Colonic mucosa (tissue), 4 donors: ENCODE measurements at regions of chr2 and their contacts with region 1.

Region 1: GRCh38 chr2:161223139-161223732 is 63.0 kb downstream of the TANK start:
- DNase-seq: no peak
- H3K4me3 ChIP-seq: no peak overlapping the region
- H3K27ac ChIP-seq: no peak overlapping the region
- H3K4me1 ChIP-seq: no peaks in the 10 kb centered on the region
- H3K27me3 ChIP-seq: no peaks in the 10 kb centered on the region
- CTCF ChIP-seq: peak; percentile 70

Region 2: DNA sequence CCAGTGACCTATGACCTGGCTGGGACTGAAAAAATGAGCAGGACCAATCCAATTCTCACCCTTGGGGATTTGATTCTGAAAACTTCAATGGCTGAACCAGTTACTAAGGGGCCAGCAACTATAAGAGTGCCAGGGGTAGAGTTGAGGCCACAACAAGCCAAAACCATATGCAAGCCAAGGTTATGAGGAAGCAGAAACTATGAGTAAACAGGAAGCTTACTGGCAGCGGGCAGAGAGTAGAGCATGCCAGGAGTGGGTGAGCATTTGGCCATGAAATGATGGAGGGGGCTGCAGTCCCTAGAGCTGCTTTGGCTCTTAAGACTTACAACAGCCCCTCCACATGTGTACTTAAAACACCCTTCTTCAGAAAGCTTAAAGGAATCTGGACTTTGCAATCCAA is 812.1 kb before region 1 on chr2:
- intact Hi-C with region 1: no loop called
- DNase-seq: no peak
- H3K4me3 ChIP-seq: no peak overlapping the region
- H3K27ac ChIP-seq: peak overlapping the region; percentile 36
- H3K4me1 ChIP-seq: peaks cover 6% of the 10 kb centered on the region
- H3K27me3 ChIP-seq: peaks cover 11% of the 10 kb centered on the region
- CTCF ChIP-seq: no peak

Region 3: DNA sequence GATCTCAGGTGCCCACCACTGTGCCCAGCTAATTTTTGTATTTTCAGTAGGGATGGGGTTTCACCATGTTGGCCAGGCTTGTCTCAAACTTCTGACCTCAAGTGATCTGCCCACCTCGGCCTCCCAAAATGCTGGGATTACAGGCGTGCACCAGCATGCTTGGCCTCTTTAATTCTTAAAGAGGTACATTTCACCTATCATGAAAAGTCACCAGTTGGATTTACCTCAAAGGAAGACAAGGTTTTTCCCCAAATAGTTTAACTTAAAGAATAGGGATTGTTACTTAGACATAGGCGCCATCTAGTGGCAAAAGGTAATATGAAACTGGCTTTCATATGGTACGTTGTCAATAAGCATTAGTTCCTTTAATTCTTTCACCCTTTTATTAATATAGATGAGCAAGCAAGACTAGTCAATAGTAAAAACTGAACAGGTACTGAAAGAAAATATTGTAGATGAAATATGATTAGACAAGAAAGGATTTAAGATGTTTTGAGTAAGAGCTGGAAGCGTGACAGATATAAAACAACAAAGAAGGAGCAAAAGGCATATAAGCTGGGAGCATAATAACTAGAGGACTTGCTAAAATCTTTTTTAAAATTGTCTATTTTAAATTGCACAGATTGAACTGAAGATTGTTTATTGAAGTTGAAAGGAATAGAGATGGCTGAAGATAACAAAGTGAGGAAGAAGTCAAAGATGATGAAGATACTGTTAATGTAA is 50.0 kb after region 1 on chr2:
- intact Hi-C with region 1: loop called (anchors 2 kb)
- DNase-seq: peak; percentile 27
- H3K4me3 ChIP-seq: no peak overlapping the region
- H3K27ac ChIP-seq: no peak overlapping the region
- H3K4me1 ChIP-seq: no peaks in the 10 kb centered on the region
- H3K27me3 ChIP-seq: no peaks in the 10 kb centered on the region
- CTCF ChIP-seq: peak; percentile 64

Region 4: GRCh38 chr2:161321944-161322648 is 98.9 kb after region 1 on chr2:
- intact Hi-C with region 1: no loop called
- DNase-seq: no peak
- H3K4me3 ChIP-seq: no peak overlapping the region
- H3K27ac ChIP-seq: no peak overlapping the region
- H3K4me1 ChIP-seq: no peaks in the 10 kb centered on the region
- H3K27me3 ChIP-seq: no peaks in the 10 kb centered on the region
- CTCF ChIP-seq: no peak

Region 5: GRCh38 chr2:161400076-161400475 is 176.8 kb after region 1 on chr2:
- intact Hi-C with region 1: no loop called
- DNase-seq: no peak
- H3K4me3 ChIP-seq: no peak overlapping the region
- H3K27ac ChIP-seq: no peak overlapping the region
- H3K4me1 ChIP-seq: no peaks in the 10 kb centered on the region
- H3K27me3 ChIP-seq: no peaks in the 10 kb centered on the region
- CTCF ChIP-seq: no peak

Region 6: DNA sequence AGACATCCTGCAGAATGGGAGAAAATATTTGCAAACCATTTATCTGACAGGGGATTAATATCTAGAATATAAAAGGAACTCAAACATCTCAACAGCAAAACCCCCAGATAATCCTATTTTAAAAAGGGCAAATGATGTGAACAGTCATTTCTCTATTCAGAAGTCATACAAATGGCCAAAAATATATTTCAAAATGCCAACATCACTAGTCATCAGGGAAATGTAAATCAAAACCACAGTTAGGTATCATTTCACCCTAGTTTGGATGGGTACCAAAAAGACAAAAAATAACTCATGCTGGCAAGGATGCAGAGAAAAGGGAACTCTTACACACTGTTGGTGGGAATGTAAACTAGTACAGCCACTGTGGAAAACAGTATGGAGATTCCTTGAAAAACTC is 262.9 kb after region 1 on chr2:
- intact Hi-C with region 1: no loop called
- DNase-seq: no peak
- H3K4me3 ChIP-seq: no peak overlapping the region
- H3K27ac ChIP-seq: no peak overlapping the region
- H3K4me1 ChIP-seq: no peaks in the 10 kb centered on the region
- H3K27me3 ChIP-seq: no peaks in the 10 kb centered on the region
- CTCF ChIP-seq: no peak